ENCODE measurements at regions of chr16 and their contacts with region 1.

Region 1: DNA sequence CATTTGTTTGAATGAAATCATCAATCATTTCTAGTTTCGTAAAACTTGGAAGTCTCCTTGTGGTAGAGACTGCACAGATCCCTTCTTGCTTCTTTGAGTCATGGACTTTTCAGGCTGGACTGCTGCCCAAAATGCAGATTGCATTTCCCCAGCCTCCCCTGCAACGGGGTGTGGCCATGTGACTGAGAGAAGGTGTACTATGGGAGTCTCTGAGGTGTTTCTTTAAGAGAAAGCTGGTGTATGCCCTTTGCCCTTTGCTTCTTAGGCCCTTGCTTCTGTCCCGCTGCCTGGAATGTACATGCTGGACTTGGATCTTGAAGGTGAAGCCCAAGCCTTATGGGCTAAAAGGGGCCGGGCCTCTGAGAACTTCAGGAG is 51.6 kb downstream of the FTO start:
- DNase-seq: no peak
- ATAC-seq: no peak
- H3K4me3 Mint-ChIP-seq: no peak overlapping the region
- H3K27ac Mint-ChIP-seq: no peak overlapping the region
- H3K4me1 Mint-ChIP-seq: peaks cover 4% of the 10 kb centered on the region
- H3K27me3 Mint-ChIP-seq: no peaks in the 10 kb centered on the region

Region 2: GRCh38 chr16:53843084-53843483 is 87.6 kb after region 1 on chr16:
- CTCF ChIA-PET with region 1: no interaction called
- POLR2A ChIA-PET with region 1: interaction called, 11 read pairs
- intact Hi-C with region 1: no loop called
- DNase-seq: no peak
- ATAC-seq: peak; percentile 26
- H3K4me3 Mint-ChIP-seq: no peak overlapping the region
- H3K27ac Mint-ChIP-seq: no peak overlapping the region
- H3K4me1 Mint-ChIP-seq: peaks cover 5% of the 10 kb centered on the region
- H3K27me3 Mint-ChIP-seq: no peaks in the 10 kb centered on the region

Measured in activated CD4-positive, alpha-beta T cell treated with anti-CD3 and anti-CD28 coated beads for 36 hours (primary cell).